Aorta (tissue), 5 donors: ENCODE measurements at regions of chr17 and their contacts with region 1.

Region 1: GRCh38 chr17:81601525-81602120 is 35.3 kb downstream of the NPLOC4 start:
- DNase-seq: peak in 1 of 2 donors; percentile 41
- ATAC-seq: peak; percentile 82
- H3K4me3 ChIP-seq: no peak overlapping the region
- H3K27ac ChIP-seq: no peak overlapping the region
- H3K4me1 ChIP-seq: no peaks in the 10 kb centered on the region
- H3K27me3 ChIP-seq: no peaks in the 10 kb centered on the region

Region 2: GRCh38 chr17:81514739-81515529 is 86.7 kb before region 1 on chr17:
- intact Hi-C with region 1: loop called (anchors 5 kb)
- DNase-seq: peak; percentile 90 to 94
- ATAC-seq: peak; percentile 70
- H3K4me3 ChIP-seq: peak overlapping the region; percentile 72 to 93
- H3K27ac ChIP-seq: peak overlapping the region; percentile 85 to 100
- H3K4me1 ChIP-seq: peaks cover 0 to 1% of the 10 kb centered on the region in 2 donors
- H3K27me3 ChIP-seq: peaks cover 0 to 2% of the 10 kb centered on the region in 2 donors

Region 3: GRCh38 chr17:81558941-81559806 is 42.4 kb before region 1 on chr17:
- intact Hi-C with region 1: loop called in 1 of 2 experiments (anchors 5 kb)
- DNase-seq: no peak
- ATAC-seq: peak; percentile 57
- H3K4me3 ChIP-seq: no peak overlapping the region
- H3K27ac ChIP-seq: no peak overlapping the region
- H3K4me1 ChIP-seq: no peaks in the 10 kb centered on the region
- H3K27me3 ChIP-seq: no peaks in the 10 kb centered on the region